ENCODE measurements at regions of chr19 and their contacts with region 1.

Region 1: GRCh38 chr19:46661020-46661731 is at the start of gene DACT3:
- DNase-seq: peak; percentile 99 to 100
- H3K4me3 ChIP-seq: peak within 1 kb of the TSS; percentile 59
- H3K27ac ChIP-seq: no peak within 1 kb of the TSS
- H3K4me1 ChIP-seq: peaks cover 12% of the 10 kb centered on the region
- H3K27me3 ChIP-seq: peaks cover 31% of the 10 kb centered on the region
- CTCF ChIP-seq: no peak
- total RNA-seq, gene DACT3: 0.13 TPM in 1 of 2 replicates, not detected in the other

Region 2: DNA sequence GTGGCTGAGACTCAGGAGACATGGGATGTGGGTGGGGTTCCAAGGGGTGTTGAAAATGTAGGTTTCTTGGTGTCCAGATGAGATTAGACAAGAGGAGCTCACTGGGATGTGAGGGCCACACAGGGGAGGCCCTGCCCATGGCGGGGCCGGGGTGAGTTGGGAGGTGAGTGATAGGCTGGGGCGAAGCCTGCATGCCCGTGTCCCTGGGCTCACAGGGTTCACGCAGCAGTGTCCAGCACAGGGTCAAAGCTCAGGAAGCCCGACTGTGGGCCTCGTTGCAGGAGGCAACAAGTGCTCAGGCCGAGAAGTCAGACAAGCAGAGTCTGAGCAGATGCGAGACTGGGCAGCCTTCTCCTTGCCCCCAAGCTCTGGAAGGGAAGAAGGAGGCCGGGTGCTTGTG is 275.0 kb before region 1 on chr19:
- CTCF ChIA-PET with region 1: no interaction called
- POLR2A ChIA-PET with region 1: interaction called, 16 read pairs
- intact Hi-C with region 1: no loop called
- DNase-seq: no peak
- H3K4me3 ChIP-seq: no peak overlapping the region
- H3K27ac ChIP-seq: no peak overlapping the region
- H3K4me1 ChIP-seq: no peaks in the 10 kb centered on the region
- H3K27me3 ChIP-seq: no peaks in the 10 kb centered on the region
- CTCF ChIP-seq: no peak

Region 3: DNA sequence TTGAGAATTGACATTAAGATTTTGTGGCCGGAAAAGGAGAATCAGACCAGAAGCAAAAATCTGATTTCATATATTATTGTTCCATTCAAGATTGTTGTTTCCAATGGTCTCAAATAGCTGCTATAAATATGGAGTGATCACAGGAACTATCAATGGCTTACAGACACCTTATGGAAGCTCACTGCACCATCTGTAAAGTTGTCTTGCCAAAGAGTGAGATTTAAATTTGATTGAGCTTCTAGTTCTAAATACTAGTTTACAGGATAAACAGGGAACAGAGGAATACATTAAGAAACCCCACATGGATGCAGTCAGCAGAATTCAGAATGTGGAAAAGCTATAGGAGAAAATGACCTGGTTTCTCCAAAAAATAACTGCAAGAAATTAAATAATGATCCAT is 107.0 kb before region 1 on chr19:
- CTCF ChIA-PET with region 1: no interaction called
- POLR2A ChIA-PET with region 1: interaction called, 24 read pairs
- intact Hi-C with region 1: no loop called
- DNase-seq: no peak
- H3K4me3 ChIP-seq: no peak overlapping the region
- H3K27ac ChIP-seq: no peak overlapping the region
- H3K4me1 ChIP-seq: no peaks in the 10 kb centered on the region
- H3K27me3 ChIP-seq: no peaks in the 10 kb centered on the region
- CTCF ChIP-seq: no peak

Region 4: DNA sequence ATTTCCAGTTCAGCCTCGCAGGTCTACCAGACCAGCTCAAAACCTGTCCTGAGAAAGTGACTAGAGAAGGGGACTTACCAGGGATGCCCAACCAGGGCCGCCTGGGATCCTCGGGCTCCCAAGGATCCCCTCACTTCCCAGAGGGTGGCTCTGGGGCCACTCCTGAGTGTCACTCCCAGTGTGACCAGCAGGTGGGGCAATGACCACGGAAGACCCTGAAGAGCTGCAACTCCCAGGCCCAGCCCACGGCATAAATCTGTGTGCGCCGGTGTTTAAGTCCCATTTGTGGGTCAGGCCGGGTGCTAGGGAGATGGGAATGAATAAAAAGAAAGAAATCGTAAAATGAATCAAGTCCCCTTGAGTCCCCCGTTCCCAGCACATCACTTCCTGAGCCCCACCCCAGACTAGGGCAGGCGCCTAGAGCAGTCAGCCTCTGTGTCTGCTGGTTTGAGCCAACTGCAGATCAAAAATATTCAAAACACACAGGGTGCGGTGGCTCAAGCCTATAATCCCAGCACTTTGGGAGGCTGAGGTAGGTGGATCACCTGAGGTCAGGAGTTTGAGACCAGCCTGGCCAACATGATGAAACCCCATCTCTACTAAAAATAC is 47.0 kb before region 1 on chr19:
- CTCF ChIA-PET with region 1: interaction called, 32 read pairs
- POLR2A ChIA-PET with region 1: no interaction called
- intact Hi-C with region 1: loop called (anchors 1 kb)
- DNase-seq: peak; percentile 55 to 79
- H3K4me3 ChIP-seq: no peak overlapping the region
- H3K27ac ChIP-seq: no peak overlapping the region
- H3K4me1 ChIP-seq: no peaks in the 10 kb centered on the region
- H3K27me3 ChIP-seq: no peaks in the 10 kb centered on the region
- CTCF ChIP-seq: peak; percentile 97

Region 5: GRCh38 chr19:46730953-46731501 is 69.9 kb after region 1 on chr19:
- CTCF ChIA-PET with region 1: no interaction called
- POLR2A ChIA-PET with region 1: interaction called, 38 read pairs
- intact Hi-C with region 1: no loop called
- DNase-seq: peak; percentile 92 to 96
- H3K4me3 ChIP-seq: peak overlapping the region; percentile 2; the same call in 1 of the 2 replicates
- H3K27ac ChIP-seq: peak overlapping the region; percentile 83
- H3K4me1 ChIP-seq: peaks cover 54% of the 10 kb centered on the region
- H3K27me3 ChIP-seq: no peaks in the 10 kb centered on the region
- CTCF ChIP-seq: no peak

Measured in PC-9 (cell line).